ENCODE measurements at regions of chr5 and their contacts with region 1.

Region 1: DNA sequence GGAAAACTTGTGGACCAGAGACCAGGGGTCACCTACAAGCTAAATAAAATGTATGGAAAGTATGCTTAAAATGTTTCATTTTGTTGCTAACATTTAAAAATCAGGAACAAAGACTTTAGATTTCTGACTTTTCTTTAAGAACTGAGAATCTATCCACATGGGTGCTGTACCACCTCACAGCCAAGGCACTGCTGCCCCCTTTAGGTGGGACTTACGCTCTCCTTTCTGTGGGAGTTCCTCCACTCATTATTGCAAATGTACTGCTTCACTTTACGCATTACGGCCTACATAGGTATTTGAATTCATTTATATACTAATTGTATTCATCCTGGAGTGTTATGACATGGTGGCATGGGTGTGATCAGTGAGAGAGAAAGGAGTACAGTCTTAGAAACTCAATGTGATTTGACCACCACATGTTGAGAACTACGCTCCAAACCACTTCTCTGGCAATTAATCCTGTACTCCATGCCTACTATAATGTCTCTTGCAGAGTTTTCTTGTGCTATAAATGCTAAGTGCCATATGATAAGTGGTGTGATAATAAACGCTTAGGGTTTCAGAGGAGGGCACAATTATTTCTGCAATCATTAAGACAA is 24.7 kb upstream of the CETN3 start:
- DNase-seq: peak in 1 of 2 experiments; percentile 57
- ATAC-seq: peak; percentile 93 to 97; a peak in 4 of 6 replicates
- H3K4me3 ChIP-seq: no peak overlapping the region
- H3K27ac ChIP-seq: no peak overlapping the region
- H3K4me1 ChIP-seq: no peaks in the 10 kb centered on the region
- CTCF ChIP-seq: peak; percentile 53
- EP300 ChIP-seq: no peak
- POLR2A ChIP-seq: no peak
- RAD21 ChIP-seq: peak; percentile 66 to 79

Region 2: DNA sequence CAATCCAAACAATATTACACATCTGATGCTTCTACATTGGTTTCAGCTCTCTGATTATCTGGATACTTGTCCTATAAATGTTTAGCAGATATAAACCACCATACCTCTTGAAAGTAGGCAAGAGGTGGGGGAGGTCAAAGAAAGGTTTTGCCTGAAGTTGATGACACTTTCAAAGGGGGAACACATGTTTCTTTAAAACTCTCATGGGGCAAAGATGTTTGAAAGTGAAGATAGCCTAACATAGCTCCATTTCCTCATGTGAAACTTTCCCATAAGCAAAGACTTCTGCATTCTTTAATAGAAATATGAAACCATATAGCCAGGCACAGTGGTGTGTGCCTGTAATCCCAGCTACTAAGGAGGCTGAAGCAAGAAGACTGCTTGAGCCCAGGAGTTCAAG is 86.8 kb before region 1 on chr5:
- CTCF ChIA-PET with region 1: no interaction called
- POLR2A ChIA-PET with region 1: no interaction called
- DNase-seq: no peak
- ATAC-seq: no peak
- H3K4me3 ChIP-seq: no peak overlapping the region
- H3K27ac ChIP-seq: no peak overlapping the region
- H3K4me1 ChIP-seq: no peaks in the 10 kb centered on the region
- CTCF ChIP-seq: no peak
- EP300 ChIP-seq: no peak
- POLR2A ChIP-seq: no peak
- RAD21 ChIP-seq: no peak

Region 3: GRCh38 chr5:90474235-90475109 is 40.3 kb after region 1 on chr5 and contains the starts of genes MBLAC2 and POLR3G:
- CTCF ChIA-PET with region 1: interaction called, 7 read pairs
- POLR2A ChIA-PET with region 1: interaction called, 13 read pairs
- DNase-seq: peak; percentile 80 to 96
- ATAC-seq: peak; percentile 91 to 94
- H3K4me3 ChIP-seq: peak within 1 kb of the TSS; percentile 80
- H3K27ac ChIP-seq: peak within 1 kb of the TSS; percentile 92 to 94
- H3K4me1 ChIP-seq: peaks cover 13% of the 10 kb centered on the region
- CTCF ChIP-seq: no peak; the same call in 2 of the 3 replicates
- EP300 ChIP-seq: no peak
- POLR2A ChIP-seq: peak; percentile 77
- RAD21 ChIP-seq: 0 out of 5 replicates have a peak, but pooled peaks of 1 of the 2 experiments have one; percentile 2
- polyA plus RNA-seq, gene MBLAC2: 4.4 and 5.3 TPM in 2 replicates
- polyA plus RNA-seq, gene POLR3G: 15.7 and 22.6 TPM in 2 replicates

Measured in A549 (cell line).